Activated T-helper 1 cell treated with anti-CD3 and anti-CD28 coated beads, Interleukin-12 subunit alpha, Interleukin-12 subunit beta, Interleukin-2, Interleukin-4 antibody, amounts not matched to agents 30 ng/mL and 10 ng/mL and 1 ng/mL, durations not matched to agents 14 hours and 24 hours and 36 hours (primary cell): ENCODE measurements at regions of chr12 and their contacts with region 1.

Region 1: DNA sequence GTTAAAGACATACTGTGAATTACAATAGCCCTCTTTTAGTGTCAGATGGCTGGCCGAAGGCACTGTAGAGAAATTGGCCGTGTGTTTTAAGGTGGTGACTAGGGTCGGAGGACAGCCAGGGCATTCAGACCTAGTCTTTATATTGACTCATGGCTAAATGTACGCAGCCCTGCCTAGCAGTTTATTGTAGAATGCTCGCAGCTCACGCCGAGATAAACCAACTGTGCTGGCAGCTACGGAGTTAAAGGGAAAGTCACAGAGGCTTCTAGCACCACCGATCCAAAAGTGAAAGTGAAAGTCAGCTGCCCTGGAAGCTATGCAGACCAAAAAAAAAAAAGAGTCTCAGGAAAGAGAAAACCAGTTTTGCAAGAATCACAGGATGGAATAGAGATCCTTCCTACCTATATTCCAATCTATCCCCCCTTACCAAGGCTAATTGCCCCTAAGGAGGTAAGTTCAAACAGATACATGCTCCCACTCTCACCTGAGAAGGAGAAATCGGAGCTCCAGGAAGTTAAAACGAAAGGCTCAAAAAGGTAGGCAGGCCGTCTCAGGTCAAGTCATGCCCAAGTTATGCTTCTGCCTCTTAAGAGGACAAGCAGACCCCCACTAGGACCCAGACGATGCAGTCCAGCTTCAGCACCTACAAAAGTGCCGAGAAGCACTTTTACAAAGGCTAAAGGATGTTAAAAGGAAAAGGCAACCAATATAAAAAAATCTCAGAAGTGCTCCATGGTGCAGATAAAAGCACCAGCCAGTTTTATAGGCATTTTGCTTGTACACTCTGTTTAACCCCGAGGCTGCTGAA is 24.8 kb downstream of the KLRK1 start:
- DNase-seq: peak; percentile 52
- H3K4me3 Mint-ChIP-seq: no peak overlapping the region
- H3K27ac Mint-ChIP-seq: no peak overlapping the region
- H3K4me1 Mint-ChIP-seq: no peaks in the 10 kb centered on the region
- H3K27me3 Mint-ChIP-seq: peaks cover 39% of the 10 kb centered on the region

Region 2: GRCh38 chr12:10212201-10213131 is 152.6 kb before region 1 on chr12 and contains the start of gene GABARAPL1:
- intact Hi-C with region 1: loop called (anchors 2 kb)
- DNase-seq: peak; percentile 76
- H3K4me3 Mint-ChIP-seq: peak within 1 kb of the TSS; percentile 84
- H3K27ac Mint-ChIP-seq: peak within 1 kb of the TSS; percentile 93
- H3K4me1 Mint-ChIP-seq: peaks cover 32% of the 10 kb centered on the region
- H3K27me3 Mint-ChIP-seq: peaks cover 23% of the 10 kb centered on the region
- total RNA-seq, gene GABARAPL1: 5.0 and 6.6 TPM in 2 replicates